ENCODE measurements at regions of chr7 and their contacts with region 1.

Region 1: GRCh38 chr7:102326157-102326889 is 29.9 kb downstream of the SPDYE6 start:
- DNase-seq: peak in 1 of 9 experiments; percentile 11
- ATAC-seq: no peak
- H3K4me3 ChIP-seq: no peak overlapping the region
- H3K4me3 Mint-ChIP-seq: no peak overlapping the region
- H3K27ac ChIP-seq: no peak overlapping the region
- H3K27ac Mint-ChIP-seq: no peak overlapping the region
- H3K4me1 ChIP-seq: no peaks in the 10 kb centered on the region
- H3K4me1 Mint-ChIP-seq: no peaks in the 10 kb centered on the region
- H3K27me3 ChIP-seq: no peaks in the 10 kb centered on the region
- H3K27me3 Mint-ChIP-seq: peaks cover 9% of the 10 kb centered on the region
- CTCF ChIP-seq: no peak

Region 2: GRCh38 chr7:102286237-102287110 is 39.8 kb before region 1 on chr7 and contains the start of gene SH2B2:
- CTCF ChIA-PET with region 1: no interaction called
- POLR2A ChIA-PET with region 1: no interaction called
- intact Hi-C with region 1: loop called in 1 of 2 experiments (anchors 1 kb)
- DNase-seq: peak in 8 of 9 experiments; percentile 14 to 76 (median 42)
- ATAC-seq: peak; percentile 54
- H3K4me3 ChIP-seq: peak within 1 kb of the TSS; percentile 64 to 73
- H3K4me3 Mint-ChIP-seq: peak within 1 kb of the TSS; percentile 80
- H3K27ac ChIP-seq: no peak within 1 kb of the TSS
- H3K27ac Mint-ChIP-seq: no peak within 1 kb of the TSS
- H3K4me1 ChIP-seq: peaks cover 40% of the 10 kb centered on the region
- H3K4me1 Mint-ChIP-seq: peaks cover 27% of the 10 kb centered on the region
- H3K27me3 ChIP-seq: no peaks in the 10 kb centered on the region
- H3K27me3 Mint-ChIP-seq: peaks cover 2% of the 10 kb centered on the region
- CTCF ChIP-seq: no peak
- total RNA-seq, gene SH2B2: 0.72 to 1.8 TPM

Region 3: DNA sequence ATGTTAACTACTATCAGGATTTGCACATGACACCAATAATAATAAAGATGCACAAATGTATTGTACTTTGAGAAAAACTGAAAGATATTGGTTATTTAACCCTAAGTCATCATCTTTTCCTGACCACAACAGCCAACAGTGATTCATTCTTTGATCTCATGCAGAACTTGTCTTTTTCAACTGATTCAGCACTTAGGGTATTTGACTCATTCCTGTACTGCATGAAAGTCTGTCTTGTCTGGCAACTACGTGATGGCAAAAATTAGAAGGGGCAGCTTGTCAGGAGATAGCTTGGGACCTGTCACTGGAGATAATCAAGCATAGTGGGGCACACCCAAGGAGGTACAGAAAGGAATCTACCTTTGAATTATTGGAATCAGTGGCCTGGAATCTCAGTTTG is 508.7 kb after region 1 on chr7:
- CTCF ChIA-PET with region 1: no interaction called
- POLR2A ChIA-PET with region 1: no interaction called
- intact Hi-C with region 1: no loop called
- DNase-seq: no peak
- ATAC-seq: no peak
- H3K4me3 ChIP-seq: no peak overlapping the region
- H3K4me3 Mint-ChIP-seq: no peak overlapping the region
- H3K27ac ChIP-seq: no peak overlapping the region
- H3K27ac Mint-ChIP-seq: no peak overlapping the region
- H3K4me1 ChIP-seq: no peaks in the 10 kb centered on the region
- H3K4me1 Mint-ChIP-seq: no peaks in the 10 kb centered on the region
- H3K27me3 ChIP-seq: no peaks in the 10 kb centered on the region
- H3K27me3 Mint-ChIP-seq: no peaks in the 10 kb centered on the region
- CTCF ChIP-seq: no peak